Pancreas (tissue), 10 donors: ENCODE measurements at regions of chr10 and their contacts with region 1.

Region 1: GRCh38 chr10:87734987-87735827 is 75.5 kb downstream of the PAPSS2 start:
- DNase-seq: peak in 1 of 6 donors; percentile 32
- ATAC-seq: peak; percentile 58 to 93 (median 85)
- H3K4me3 ChIP-seq: no peak overlapping the region
- H3K27ac ChIP-seq: no peak overlapping the region
- H3K4me1 ChIP-seq: peaks cover 0 to 6% (median 5%) of the 10 kb centered on the region in 3 donors
- H3K27me3 ChIP-seq: no peaks in the 10 kb centered on the region
- CTCF ChIP-seq: peak; percentile 35 to 74 (median 64)

Region 2: GRCh38 chr10:87531908-87532622 is 203.1 kb before region 1 on chr10:
- intact Hi-C with region 1: loop called in 1 of 3 experiments (anchors 10 kb)
- DNase-seq: no peak
- ATAC-seq: peak in 3 of 4 donors; percentile 13 to 55 (median 41)
- H3K4me3 ChIP-seq: no peak overlapping the region
- H3K27ac ChIP-seq: peak overlapping the region in 1 of 4 donors; percentile 35
- H3K4me1 ChIP-seq: peaks cover 0 to 7% (median 0%) of the 10 kb centered on the region in 3 donors
- H3K27me3 ChIP-seq: no peaks in the 10 kb centered on the region
- CTCF ChIP-seq: no peak

Region 3: DNA sequence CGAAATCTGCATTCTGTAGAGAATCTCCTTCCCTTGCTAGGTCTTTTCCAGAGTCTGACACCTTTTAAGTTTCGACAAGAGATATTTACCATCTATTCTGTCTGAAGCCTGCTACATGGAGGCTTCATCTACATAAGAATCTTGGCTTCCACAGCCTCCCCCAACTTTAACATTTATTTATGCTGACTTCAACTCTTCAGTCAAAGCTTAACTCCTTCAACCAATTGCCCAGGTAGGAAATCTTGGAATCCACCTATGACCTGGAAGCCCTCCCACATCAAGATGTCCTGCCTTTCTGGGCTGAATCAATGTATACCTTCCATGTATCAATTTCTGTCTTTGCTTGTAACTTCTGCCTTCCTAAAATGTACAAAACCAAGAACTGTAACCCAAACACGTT is 175.8 kb before region 1 on chr10:
- intact Hi-C with region 1: no loop called
- DNase-seq: no peak
- ATAC-seq: no peak
- H3K4me3 ChIP-seq: no peak overlapping the region
- H3K27ac ChIP-seq: no peak overlapping the region
- H3K4me1 ChIP-seq: no peaks in the 10 kb centered on the region
- H3K27me3 ChIP-seq: no peaks in the 10 kb centered on the region
- CTCF ChIP-seq: no peak